Esophagus squamous epithelium (tissue), 5 donors: ENCODE measurements at regions of chr7 and their contacts with region 1.

Region 1: DNA sequence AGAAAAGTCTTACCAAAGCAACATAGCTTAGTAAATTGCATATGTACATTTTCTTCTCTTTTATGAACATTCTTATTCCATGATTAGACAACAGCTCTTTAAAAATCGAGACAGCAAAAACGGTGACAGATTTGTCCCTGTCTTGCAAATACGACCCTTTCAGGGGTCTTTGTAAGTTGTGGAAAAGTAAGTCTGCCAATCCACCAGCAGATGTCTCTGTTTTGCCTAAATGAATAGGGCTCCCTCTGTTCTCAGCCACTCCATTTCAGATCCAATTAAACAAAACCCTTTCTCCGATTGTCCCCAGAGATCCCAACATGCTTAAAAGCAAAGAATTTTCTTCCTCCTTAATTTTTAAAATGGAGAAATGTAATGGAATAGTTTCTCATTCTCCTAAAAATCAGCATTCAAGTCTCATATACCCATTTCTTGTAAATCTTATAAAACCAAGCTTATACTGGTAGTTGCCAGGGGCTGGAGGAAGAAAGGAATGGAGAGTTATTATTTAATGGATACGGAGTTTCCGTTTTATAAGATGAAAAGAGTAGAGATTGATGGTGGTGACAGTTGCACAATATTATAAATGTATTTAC is 61.0 kb upstream of the NFE2L3 start:
- DNase-seq: no peak
- H3K4me3 ChIP-seq: no peak overlapping the region
- H3K27ac ChIP-seq: no peak overlapping the region
- H3K4me1 ChIP-seq: peaks cover 0 to 25% (median 7%) of the 10 kb centered on the region in 3 donors
- H3K27me3 ChIP-seq: no peaks in the 10 kb centered on the region
- CTCF ChIP-seq: peak; percentile 33 to 74 (median 60)
- POLR2A ChIP-seq: no peak

Region 2: DNA sequence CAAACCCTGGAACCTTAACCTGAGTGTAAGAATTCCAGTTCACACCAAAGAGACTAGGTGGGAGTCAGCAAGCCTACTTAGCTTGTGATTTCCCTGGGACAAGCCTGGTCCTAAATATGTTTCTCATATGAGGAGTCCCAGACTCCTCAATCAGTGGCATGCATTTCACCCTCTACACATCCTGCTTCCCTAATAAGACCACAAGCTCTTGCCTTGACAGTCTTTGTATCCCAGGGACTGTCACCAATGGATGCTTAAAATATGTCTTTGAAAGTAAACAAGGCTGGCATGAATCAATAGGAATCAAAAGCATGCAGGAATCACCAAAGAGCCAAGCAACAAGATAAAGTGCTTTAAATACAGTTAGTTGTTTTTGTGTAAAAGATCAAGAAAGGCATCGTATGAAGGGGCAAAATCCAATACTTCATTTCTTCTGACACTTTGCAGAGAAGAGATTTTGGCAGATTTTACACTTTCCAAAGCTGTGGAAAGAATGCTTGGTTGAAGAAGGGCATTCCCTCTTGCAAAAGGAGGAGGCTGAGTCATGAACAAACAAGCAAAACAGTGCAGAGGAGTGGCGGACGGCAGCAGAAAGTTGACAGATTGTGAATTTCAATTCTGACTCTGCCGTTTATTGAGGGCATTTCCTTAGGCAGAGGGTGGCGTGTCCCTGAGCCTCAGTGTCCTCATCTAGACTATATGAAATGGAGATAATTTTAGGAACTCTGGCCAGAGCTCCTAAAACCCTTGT is 52.5 kb after region 1 on chr7:
- intact Hi-C with region 1: loop called (anchors 10 kb)
- DNase-seq: no peak
- H3K4me3 ChIP-seq: no peak overlapping the region
- H3K27ac ChIP-seq: peak overlapping the region in 1 of 4 donors; percentile 29
- H3K4me1 ChIP-seq: peaks cover 0 to 38% (median 0%) of the 10 kb centered on the region in 3 donors
- H3K27me3 ChIP-seq: no peaks in the 10 kb centered on the region
- CTCF ChIP-seq: no peak
- POLR2A ChIP-seq: no peak

Region 3: DNA sequence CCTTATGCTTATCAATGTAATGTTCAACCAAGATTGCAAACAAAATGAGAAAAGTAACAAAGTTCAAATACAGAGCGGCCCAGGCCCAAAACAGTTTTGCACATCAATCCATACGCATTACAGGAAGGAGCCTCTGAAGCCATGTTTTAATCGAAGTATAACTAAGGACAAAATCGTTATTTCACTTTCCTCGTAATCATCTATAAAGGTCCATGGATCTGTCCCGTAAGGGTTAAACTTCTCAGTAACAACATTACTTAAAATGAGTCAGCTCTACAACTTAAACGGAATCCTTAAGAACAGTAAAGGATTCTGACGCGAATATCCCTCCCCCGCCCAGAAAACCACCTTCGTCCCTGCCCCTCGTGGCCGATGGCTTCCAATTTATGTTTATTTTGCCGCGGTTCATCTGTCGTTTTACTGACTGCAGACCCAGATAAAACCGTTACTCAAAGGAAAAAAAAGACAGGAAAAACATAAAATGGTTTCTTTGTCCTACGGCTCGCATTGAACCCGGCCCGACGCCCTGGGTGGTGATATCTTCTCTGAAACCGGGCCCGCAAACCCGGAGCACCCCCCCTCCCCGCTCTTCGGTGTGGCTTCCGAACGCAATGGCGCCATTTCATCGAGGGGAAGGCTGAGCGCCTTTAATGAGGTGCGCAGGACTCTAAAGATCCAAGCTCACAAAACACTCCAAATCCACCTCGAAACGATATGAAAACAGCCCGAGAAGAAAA is 108.4 kb after region 1 on chr7:
- intact Hi-C with region 1: loop called (anchors 10 kb)
- DNase-seq: peak; percentile 10
- H3K4me3 ChIP-seq: peak overlapping the region; percentile 77 to 100 (median 94)
- H3K27ac ChIP-seq: peak overlapping the region; percentile 99 to 100 (median 100)
- H3K4me1 ChIP-seq: peaks cover 15 to 60% (median 44%) of the 10 kb centered on the region in 3 donors
- H3K27me3 ChIP-seq: no peaks in the 10 kb centered on the region
- CTCF ChIP-seq: no peak
- POLR2A ChIP-seq: peak in 2 of 4 donors; percentile 40 to 56